Endothelial cell of umbilical vein (primary cell): ENCODE measurements at regions of chr10 and their contacts with region 1.

Region 1: DNA sequence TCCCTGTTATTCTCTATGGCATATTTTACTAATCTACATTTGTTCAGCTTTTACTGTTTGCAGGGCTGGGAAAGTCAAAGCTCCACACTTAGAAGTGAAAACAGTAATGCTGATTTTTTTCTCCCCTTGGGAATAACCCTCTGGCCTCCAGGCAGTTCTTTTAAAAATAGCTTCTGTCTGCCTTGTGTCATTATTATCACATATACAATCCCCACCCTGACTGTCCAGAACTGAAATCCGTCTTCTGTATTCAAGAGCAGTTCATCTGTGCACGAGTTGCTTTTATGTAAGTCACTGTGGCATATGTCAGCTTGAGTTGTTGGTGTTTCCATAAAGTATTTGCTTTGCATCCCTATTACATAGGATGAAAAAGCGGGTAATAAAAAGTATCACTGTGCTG is 1221.1 kb upstream of the CELF2 start:
- DNase-seq: no peak
- H3K4me3 ChIP-seq: no peak overlapping the region
- H3K27ac ChIP-seq: no peak overlapping the region
- H3K4me1 ChIP-seq: no peaks in the 10 kb centered on the region
- H3K27me3 ChIP-seq: no peaks in the 10 kb centered on the region
- CTCF ChIP-seq: no peak
- POLR2A ChIP-seq: no peak

Region 2: GRCh38 chr10:9853405-9854355 is 57.1 kb after region 1 on chr10:
- CTCF ChIA-PET with region 1: no interaction called
- POLR2A ChIA-PET with region 1: no interaction called
- dilution Hi-C with region 1: no loop called
- intact Hi-C with region 1: loop called (anchors 5 kb)
- DNase-seq: no peak
- H3K4me3 ChIP-seq: no peak overlapping the region
- H3K27ac ChIP-seq: no peak overlapping the region
- H3K4me1 ChIP-seq: no peaks in the 10 kb centered on the region
- H3K27me3 ChIP-seq: no peaks in the 10 kb centered on the region
- CTCF ChIP-seq: no peak
- POLR2A ChIP-seq: no peak